ENCODE measurements at regions of chr16 and their contacts with region 1.

Region 1: GRCh38 chr16:67546761-67547422 is 15.4 kb upstream of the CTCF start:
- DNase-seq: no peak
- H3K4me3 ChIP-seq: no peak overlapping the region
- H3K27ac ChIP-seq: peak overlapping the region; percentile 21
- H3K27me3 ChIP-seq: no peaks in the 10 kb centered on the region
- CTCF ChIP-seq: peak; percentile 95

Region 2: DNA sequence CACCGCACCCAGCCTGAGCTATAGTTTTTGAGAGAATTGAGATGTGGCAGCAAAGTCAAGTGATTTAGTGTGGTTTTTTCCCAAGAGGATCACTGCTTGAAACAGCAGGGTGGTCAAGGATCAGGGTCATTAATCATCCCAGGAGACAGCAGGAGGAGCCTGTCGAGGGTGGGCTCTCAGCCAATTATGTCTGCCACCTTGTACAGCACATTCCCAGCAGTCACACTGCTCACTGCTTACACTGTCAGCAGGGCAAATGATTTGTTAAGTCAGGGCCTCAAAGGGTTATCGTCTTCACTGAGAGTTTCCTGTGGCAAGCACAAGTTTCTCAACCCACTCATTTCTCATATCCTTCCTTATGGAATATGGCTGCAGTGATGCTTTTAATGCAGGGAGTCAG is 409.3 kb before region 1 on chr16:
- CTCF ChIA-PET with region 1: no interaction called
- POLR2A ChIA-PET with region 1: no interaction called
- DNase-seq: no peak
- H3K4me3 ChIP-seq: no peak overlapping the region
- H3K27ac ChIP-seq: no peak overlapping the region
- H3K27me3 ChIP-seq: no peaks in the 10 kb centered on the region
- CTCF ChIP-seq: no peak

Region 3: GRCh38 chr16:67530013-67530939 is 16.6 kb before region 1 on chr16:
- CTCF ChIA-PET with region 1: interaction called, 11 read pairs
- POLR2A ChIA-PET with region 1: no interaction called
- DNase-seq: no peak
- H3K4me3 ChIP-seq: peak overlapping the region; percentile 80
- H3K27ac ChIP-seq: peak overlapping the region; percentile 80
- H3K27me3 ChIP-seq: no peaks in the 10 kb centered on the region
- CTCF ChIP-seq: no peak

Region 4: GRCh38 chr16:67561824-67562525 is 15.1 kb after region 1 on chr16:
- CTCF ChIA-PET with region 1: interaction called, 26 read pairs
- POLR2A ChIA-PET with region 1: interaction called, 21 read pairs
- DNase-seq: peak; percentile 91
- H3K4me3 ChIP-seq: peak overlapping the region; percentile 72
- H3K27ac ChIP-seq: peak overlapping the region; percentile 75
- H3K27me3 ChIP-seq: no peaks in the 10 kb centered on the region
- CTCF ChIP-seq: no peak

Region 5: GRCh38 chr16:67579686-67580085 is 32.8 kb after region 1 on chr16:
- CTCF ChIA-PET with region 1: no interaction called
- POLR2A ChIA-PET with region 1: no interaction called
- DNase-seq: no peak
- H3K4me3 ChIP-seq: no peak overlapping the region
- H3K27ac ChIP-seq: no peak overlapping the region
- H3K27me3 ChIP-seq: no peaks in the 10 kb centered on the region
- CTCF ChIP-seq: no peak

Region 6: DNA sequence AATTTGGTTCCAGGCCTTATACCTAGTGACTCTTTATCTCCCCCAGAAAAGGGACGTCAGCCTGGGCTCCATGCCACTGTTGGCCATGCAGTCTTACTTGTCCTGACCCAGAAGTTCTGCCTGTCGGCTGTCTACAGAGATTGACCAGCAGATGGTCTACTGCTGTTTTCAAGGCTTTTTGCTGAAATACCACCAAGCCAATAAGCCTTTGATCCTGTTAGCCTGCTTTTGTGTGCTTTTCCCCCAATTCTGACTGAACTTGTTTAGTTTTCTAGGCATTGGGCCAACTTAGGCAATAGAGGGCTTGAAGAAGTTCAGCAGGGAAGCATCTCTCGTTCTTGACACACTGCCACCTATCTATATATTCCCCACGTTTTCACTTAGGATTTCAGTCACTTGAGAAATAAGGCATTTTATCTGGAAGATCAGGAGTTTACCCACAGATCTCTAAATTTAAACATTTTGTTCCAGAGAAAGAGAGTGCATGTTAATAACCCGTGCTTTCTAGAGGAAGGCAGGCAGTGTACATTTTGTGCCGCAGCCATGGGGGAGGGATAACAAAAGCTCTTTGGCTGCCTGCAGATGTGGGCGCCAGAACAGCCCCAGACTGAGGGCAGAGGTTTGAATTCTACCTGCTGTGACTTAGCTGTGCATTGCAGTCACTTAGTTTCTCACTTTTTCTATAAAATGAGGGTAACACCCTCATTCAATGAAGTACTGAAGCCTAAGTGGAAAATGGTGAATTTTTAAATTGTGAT is 85.7 kb after region 1 on chr16:
- CTCF ChIA-PET with region 1: interaction called, 10 read pairs
- POLR2A ChIA-PET with region 1: no interaction called
- DNase-seq: peak; percentile 45
- H3K4me3 ChIP-seq: no peak overlapping the region
- H3K27ac ChIP-seq: no peak overlapping the region
- H3K27me3 ChIP-seq: no peaks in the 10 kb centered on the region
- CTCF ChIP-seq: peak; percentile 24; the same call in 1 of the 2 replicates

Region 7: DNA sequence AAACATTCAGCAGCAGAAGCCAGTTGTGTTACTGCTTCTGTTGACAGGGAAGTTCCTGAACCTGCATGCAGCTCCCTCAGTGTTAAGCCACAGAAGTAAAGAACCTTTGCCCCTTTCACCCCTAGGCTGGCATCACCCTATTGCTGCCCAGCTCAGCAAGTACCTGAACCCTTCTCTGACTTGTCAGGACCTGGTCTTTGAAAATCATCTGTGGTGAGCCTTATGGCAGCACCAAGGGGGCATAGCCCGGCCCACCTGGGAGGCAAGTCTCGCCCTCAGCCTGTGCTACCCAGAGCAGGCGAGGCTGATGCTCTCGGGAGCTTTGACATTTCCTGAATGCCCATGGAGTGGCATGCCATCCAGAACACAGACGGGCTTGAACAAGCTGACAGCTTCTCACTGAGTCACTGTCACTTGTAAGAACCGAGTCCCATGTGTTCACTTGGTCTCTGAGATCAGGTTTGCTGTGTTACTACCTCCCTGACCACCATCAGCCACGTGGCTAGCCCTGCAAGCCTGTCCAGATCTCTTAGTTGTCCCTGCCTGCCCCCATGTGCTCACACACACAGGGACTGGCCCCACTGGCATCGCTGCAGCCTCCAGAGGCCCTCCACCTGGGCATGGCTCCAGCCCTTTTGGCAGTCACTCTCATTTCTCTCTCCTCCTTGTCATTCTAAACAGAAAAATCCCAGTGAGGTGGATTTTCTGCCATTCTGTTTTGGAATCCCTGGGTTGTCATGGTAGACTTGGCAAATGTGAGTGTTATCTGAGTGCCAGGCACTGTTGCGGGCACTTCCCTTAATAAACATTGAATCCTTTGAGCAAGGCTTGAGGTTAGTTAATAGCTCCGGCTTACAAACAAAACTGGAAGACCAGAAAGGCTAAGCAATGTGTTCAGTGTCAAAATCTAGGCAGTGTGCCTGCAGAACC is 95.2 kb after region 1 on chr16:
- CTCF ChIA-PET with region 1: interaction called, 74 read pairs
- POLR2A ChIA-PET with region 1: no interaction called
- DNase-seq: no peak
- H3K4me3 ChIP-seq: no peak overlapping the region
- H3K27ac ChIP-seq: no peak overlapping the region
- H3K27me3 ChIP-seq: peaks cover 22% of the 10 kb centered on the region
- CTCF ChIP-seq: no peak

Region 8: GRCh38 chr16:67667817-67668494 is 121.1 kb after region 1 on chr16:
- CTCF ChIA-PET with region 1: interaction called, 29 read pairs
- POLR2A ChIA-PET with region 1: no interaction called
- DNase-seq: peak; percentile 79
- H3K4me3 ChIP-seq: no peak overlapping the region
- H3K27ac ChIP-seq: peak overlapping the region; percentile 57
- H3K27me3 ChIP-seq: no peaks in the 10 kb centered on the region
- CTCF ChIP-seq: peak; percentile 91